ENCODE measurements at regions of chr7 and their contacts with region 1.

Region 1: GRCh38 chr7:90877201-90877600 is 281.1 kb downstream of the CDK14 start:
- DNase-seq: no peak
- ATAC-seq: no peak
- H3K4me3 ChIP-seq: no peak overlapping the region
- H3K27ac ChIP-seq: no peak overlapping the region
- H3K4me1 ChIP-seq: no peaks in the 10 kb centered on the region
- H3K27me3 ChIP-seq: no peaks in the 10 kb centered on the region
- CTCF ChIP-seq: no peak
- POLR2A ChIP-seq: no peak
- RAD21 ChIP-seq: no peak

Region 2: DNA sequence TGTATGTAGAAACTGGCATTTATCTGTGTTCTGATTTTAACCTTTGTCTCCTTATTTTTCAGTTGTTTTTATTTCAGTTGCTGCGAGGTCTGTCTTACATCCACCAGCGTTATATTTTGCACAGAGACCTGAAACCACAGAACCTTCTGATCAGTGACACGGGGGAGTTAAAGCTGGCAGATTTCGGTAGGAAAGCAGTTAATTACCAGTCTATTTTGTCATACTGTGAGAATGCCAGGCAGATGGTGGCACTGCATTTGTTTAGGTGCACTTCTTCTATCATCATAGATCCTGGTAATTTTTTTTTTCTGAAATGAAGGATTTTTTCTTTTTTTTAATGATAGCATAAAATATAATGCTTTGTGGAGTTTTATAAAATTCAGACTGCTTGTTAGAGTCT is 40.3 kb after region 1 on chr7:
- CTCF ChIA-PET with region 1: no interaction called
- POLR2A ChIA-PET with region 1: no interaction called
- dilution Hi-C with region 1: no loop called
- in situ Hi-C with region 1: no loop called
- intact Hi-C with region 1: loop called (anchors 5 kb)
- DNase-seq: no peak
- ATAC-seq: no peak
- H3K4me3 ChIP-seq: no peak overlapping the region
- H3K27ac ChIP-seq: no peak overlapping the region
- H3K4me1 ChIP-seq: peaks cover 2% of the 10 kb centered on the region; the same call in 1 of the 2 replicates
- H3K27me3 ChIP-seq: no peaks in the 10 kb centered on the region
- CTCF ChIP-seq: no peak
- POLR2A ChIP-seq: no peak
- RAD21 ChIP-seq: no peak

Region 3: DNA sequence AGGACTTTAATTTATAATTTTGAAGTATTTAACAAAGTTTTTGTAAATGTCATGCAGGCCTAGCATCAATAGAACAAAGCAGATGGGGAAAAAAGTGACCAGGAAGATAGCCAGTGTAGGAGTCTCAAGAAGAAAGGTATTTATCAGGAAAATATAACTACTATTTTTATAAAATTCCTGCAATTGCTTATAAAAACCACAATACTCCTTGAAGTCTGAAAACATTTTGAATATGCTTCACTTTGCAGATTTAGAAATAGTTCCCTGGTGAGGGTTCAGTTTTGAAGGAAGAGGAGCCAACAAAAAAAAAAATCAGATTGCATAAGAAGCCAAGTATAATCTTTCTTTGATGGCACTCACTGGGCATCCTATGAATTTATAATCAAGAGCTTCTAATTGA is 969.2 kb after region 1 on chr7:
- CTCF ChIA-PET with region 1: no interaction called
- POLR2A ChIA-PET with region 1: interaction called, 11 read pairs
- dilution Hi-C with region 1: no loop called
- in situ Hi-C with region 1: no loop called
- intact Hi-C with region 1: no loop called
- DNase-seq: peak; percentile 21
- ATAC-seq: no peak
- H3K4me3 ChIP-seq: no peak overlapping the region
- H3K27ac ChIP-seq: no peak overlapping the region
- H3K4me1 ChIP-seq: peaks cover 3% of the 10 kb centered on the region; the same call in 1 of the 2 replicates
- H3K27me3 ChIP-seq: no peaks in the 10 kb centered on the region
- CTCF ChIP-seq: no peak
- POLR2A ChIP-seq: no peak
- RAD21 ChIP-seq: no peak

Measured in IMR-90 (cell line).